Activated naive CD4-positive, alpha-beta T cell treated with anti-CD3 and anti-CD28 coated beads for 36 hours (primary cell): ENCODE measurements at regions of chr1 and their contacts with region 1.

Region 1: GRCh38 chr1:64877151-64877550 is 89.2 kb downstream of the JAK1 start:
- DNase-seq: peak; percentile 68
- H3K4me3 Mint-ChIP-seq: no peak overlapping the region
- H3K27ac Mint-ChIP-seq: peak overlapping the region; percentile 76
- H3K4me1 Mint-ChIP-seq: peaks cover 58% of the 10 kb centered on the region
- H3K27me3 Mint-ChIP-seq: no peaks in the 10 kb centered on the region

Region 2: DNA sequence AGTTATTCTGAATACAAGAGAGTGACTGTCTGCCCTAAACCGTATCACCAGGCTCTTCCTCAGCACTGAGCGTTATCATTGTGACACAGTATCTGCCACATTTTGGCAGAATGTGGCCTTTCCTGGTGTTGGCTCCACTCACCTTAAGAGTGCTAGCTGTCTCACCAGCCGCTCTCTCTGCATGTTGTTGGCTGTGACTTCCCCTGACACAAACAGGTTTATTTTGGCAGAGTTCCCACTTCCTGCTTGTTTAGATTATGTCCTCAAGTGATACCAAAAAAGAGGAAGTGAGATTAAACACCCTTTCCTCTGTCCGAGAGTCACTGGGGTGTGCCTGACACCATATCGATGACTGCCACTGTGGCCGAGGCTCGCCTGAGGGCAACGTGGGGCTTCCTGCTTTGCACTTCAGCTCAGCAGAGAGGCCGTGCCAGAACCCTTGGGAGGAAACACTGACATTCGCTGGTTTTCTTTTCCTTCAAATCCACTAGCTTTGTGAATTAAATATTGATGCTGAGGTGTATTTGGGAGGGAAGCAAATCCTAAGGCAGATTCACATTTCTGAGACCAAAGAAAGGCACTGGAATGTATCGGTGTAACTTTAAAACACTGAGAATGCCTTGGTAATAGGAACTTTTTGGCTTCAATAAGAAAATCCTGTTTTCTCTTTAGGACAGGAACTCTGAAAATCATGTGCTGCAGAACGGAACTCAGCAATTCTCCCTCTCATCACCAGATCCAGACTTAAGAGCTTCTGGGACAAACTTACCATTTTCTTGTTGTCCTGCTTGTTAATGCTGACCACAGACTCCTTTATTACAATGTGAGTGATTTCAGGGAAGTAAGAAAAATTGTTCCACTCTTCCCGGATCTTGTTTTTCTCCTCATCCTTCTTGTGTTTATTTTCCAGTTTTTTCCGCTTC is 12.9 kb before region 1 on chr1:
- CTCF ChIA-PET with region 1: interaction called, 4 read pairs
- intact Hi-C with region 1: loop called (anchors 1 kb)
- DNase-seq: peak; percentile 60
- H3K4me3 Mint-ChIP-seq: no peak overlapping the region
- H3K27ac Mint-ChIP-seq: peak overlapping the region; percentile 63
- H3K4me1 Mint-ChIP-seq: peaks cover 19% of the 10 kb centered on the region
- H3K27me3 Mint-ChIP-seq: no peaks in the 10 kb centered on the region

Region 3: GRCh38 chr1:64891448-64891825 is 14.3 kb after region 1 on chr1:
- CTCF ChIA-PET with region 1: interaction called, 6 read pairs
- intact Hi-C with region 1: loop called (anchors 1 kb)
- DNase-seq: peak; percentile 51
- H3K4me3 Mint-ChIP-seq: no peak overlapping the region
- H3K27ac Mint-ChIP-seq: no peak overlapping the region
- H3K4me1 Mint-ChIP-seq: peaks cover 90% of the 10 kb centered on the region
- H3K27me3 Mint-ChIP-seq: no peaks in the 10 kb centered on the region

Region 4: DNA sequence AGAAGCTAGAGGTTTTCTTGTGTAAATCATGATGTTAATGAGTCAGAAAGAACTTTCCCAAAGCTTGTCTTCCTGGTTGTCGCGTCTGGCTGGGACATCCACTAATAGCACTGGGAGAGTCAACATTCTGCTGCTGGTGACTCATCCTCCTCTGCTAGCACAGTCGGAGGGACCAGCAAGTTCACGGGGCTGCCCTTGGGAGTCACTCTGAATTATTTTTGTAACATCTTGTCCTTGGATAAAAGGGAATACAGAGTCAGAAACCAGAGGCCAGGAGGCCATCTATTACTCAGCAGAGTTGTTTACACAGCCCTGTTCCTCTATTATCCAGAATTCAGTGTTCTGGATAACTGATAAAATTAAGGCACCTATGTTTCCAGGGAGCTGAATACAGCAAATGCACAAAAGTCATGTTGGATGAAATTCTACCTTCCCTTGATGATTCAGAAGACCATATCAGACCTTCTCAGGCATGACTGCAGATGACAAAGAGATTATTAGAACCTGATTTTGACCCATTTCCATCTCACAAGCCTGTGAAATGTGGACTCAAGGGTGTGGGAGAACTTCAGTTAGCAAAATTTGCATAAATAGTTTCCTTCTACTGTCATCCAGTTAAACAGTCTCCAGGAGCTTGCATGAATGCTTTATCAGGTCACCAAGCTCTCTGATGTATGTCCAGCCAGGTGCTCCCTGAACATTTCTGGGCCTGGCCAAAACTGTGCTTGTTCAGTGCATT is 21.1 kb after region 1 on chr1:
- CTCF ChIA-PET with region 1: interaction called, 4 read pairs
- intact Hi-C with region 1: loop called (anchors 1 kb)
- DNase-seq: peak; percentile 68
- H3K4me3 Mint-ChIP-seq: no peak overlapping the region
- H3K27ac Mint-ChIP-seq: no peak overlapping the region
- H3K4me1 Mint-ChIP-seq: peaks cover 92% of the 10 kb centered on the region
- H3K27me3 Mint-ChIP-seq: no peaks in the 10 kb centered on the region

Region 5: DNA sequence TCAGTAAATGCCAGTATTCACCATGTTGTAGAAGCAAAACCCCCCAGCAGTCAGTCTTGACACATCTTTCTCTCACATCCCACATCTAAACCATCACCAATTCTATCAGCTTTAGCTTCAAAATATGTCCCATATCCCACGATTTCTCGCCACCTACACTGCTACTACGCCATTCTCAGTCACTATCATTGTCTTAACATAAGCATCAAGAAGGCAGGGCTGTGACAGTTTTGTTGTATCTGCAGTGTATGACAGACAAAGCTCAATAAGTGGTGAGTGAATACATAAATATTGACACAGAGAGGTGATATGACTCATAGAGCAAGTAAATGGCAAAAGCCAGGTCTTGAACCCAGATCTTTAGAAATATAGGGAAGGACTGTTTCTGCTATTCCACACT is 29.3 kb after region 1 on chr1:
- CTCF ChIA-PET with region 1: interaction called, 6 read pairs
- intact Hi-C with region 1: loop called (anchors 1 kb)
- DNase-seq: peak; percentile 60
- H3K4me3 Mint-ChIP-seq: no peak overlapping the region
- H3K27ac Mint-ChIP-seq: peak overlapping the region; percentile 34
- H3K4me1 Mint-ChIP-seq: peaks cover 88% of the 10 kb centered on the region
- H3K27me3 Mint-ChIP-seq: no peaks in the 10 kb centered on the region

Region 6: GRCh38 chr1:64956733-64957441 is 79.7 kb after region 1 on chr1:
- CTCF ChIA-PET with region 1: interaction called, 12 read pairs
- intact Hi-C with region 1: loop called (anchors 2 kb)
- DNase-seq: peak; percentile 79
- H3K4me3 Mint-ChIP-seq: no peak overlapping the region
- H3K27ac Mint-ChIP-seq: no peak overlapping the region
- H3K4me1 Mint-ChIP-seq: peaks cover 63% of the 10 kb centered on the region
- H3K27me3 Mint-ChIP-seq: no peaks in the 10 kb centered on the region

Region 7: GRCh38 chr1:65036545-65037180 is 159.5 kb after region 1 on chr1:
- CTCF ChIA-PET with region 1: interaction called, 3 read pairs
- intact Hi-C with region 1: loop called (anchors 1 kb)
- DNase-seq: no peak
- H3K4me3 Mint-ChIP-seq: no peak overlapping the region
- H3K27ac Mint-ChIP-seq: no peak overlapping the region
- H3K4me1 Mint-ChIP-seq: peaks cover 11% of the 10 kb centered on the region
- H3K27me3 Mint-ChIP-seq: no peaks in the 10 kb centered on the region